Body of pancreas (tissue), 4 donors: ENCODE measurements at regions of chr11 and their contacts with region 1.

Region 1: DNA sequence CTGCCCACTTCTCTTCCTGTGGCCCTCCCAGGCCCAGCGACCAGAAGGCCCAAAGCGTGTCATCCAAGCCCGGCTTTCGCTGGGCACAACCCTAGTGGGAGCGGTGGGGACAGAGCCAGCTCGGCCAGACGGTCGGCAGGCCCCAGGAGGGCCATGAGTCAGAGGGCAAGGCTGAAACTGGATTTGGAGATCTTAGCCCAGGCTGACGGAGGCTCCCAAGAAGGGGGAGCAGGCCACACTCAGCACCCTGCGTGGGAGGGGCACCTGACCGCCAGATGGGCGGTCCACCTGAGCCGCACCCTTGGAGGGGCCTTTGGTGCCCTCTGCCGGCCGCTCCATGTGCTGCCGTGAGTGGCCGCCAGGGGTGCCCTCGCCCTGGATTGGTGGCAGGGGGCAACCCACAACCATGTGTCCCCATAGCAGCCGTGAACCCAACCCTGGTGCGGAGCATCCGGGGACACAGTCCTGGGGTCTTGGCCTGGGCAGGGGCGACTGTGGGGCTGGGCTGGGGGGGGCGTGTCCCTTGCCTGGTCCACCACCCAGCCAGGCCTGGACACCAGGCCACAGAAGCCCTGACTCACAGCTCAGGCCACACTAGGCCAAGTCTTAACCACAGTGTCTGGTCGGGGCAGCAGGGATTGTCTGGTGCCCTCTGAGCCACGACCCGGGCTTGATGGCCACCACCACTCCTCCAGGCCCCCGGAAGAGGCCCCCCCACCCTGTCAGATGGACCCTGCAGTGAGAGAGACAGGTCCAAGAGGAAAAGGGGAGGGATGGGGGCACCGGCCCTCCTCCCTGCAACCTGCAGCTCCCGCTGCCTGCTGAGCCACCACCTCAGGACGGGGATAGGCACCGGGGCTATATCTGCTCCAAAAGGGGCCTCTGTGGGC is 19.2 kb upstream of the TALDO1 start:
- DNase-seq: peak; percentile 86 to 92 (median 90)
- ATAC-seq: peak; percentile 83
- H3K4me3 ChIP-seq: no peak overlapping the region
- H3K27ac ChIP-seq: peak overlapping the region in 3 of 4 donors; percentile 22 to 86 (median 74)
- H3K4me1 ChIP-seq: peaks cover 34% of the 10 kb centered on the region
- H3K27me3 ChIP-seq: peaks cover 0 to 4% of the 10 kb centered on the region in 2 donors
- CTCF ChIP-seq: peak; percentile 95 to 100 (median 99)
- POLR2A ChIP-seq: no peak

Region 2: DNA sequence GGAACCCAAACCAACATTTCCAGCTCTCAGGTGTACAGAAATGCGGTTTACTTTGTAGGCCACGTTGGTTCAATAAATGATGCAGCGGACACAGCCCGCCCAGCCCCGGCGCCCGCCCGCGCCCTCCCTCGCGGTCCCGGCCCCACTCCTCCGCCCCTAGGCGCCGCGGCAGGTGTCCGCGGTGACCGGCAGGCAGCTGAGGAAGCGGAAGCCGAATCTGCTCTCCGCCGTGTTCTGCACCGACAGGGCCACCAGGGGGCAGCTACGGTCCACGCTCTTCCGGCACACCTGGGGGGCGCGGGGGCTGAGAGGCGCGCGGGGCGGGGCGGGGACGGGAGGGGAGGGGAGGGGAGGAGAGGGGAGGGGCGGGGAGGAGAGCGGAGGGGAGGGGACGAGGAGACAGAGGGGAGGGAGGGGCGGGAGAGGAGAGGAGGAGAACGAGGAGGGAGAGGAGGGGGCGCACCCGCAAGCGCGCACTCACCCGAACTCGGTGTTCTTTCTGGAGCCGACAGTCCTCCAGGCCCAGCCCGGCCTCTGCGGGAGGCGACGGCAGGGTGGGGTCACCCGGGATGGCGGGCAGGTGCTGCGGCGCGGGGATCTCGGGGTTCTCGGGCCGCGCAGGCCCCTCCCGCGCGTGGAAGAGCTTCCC is 173.2 kb before region 1 on chr11:
- intact Hi-C with region 1: loop called (anchors 10 kb)
- DNase-seq: peak; percentile 80 to 85 (median 83)
- ATAC-seq: peak; percentile 81
- H3K4me3 ChIP-seq: peak overlapping the region in 1 of 2 donors; percentile 10
- H3K27ac ChIP-seq: peak overlapping the region; percentile 42 to 77 (median 64)
- H3K4me1 ChIP-seq: peaks cover 36% of the 10 kb centered on the region
- H3K27me3 ChIP-seq: no peaks in the 10 kb centered on the region
- CTCF ChIP-seq: peak; percentile 45 to 84 (median 60)
- POLR2A ChIP-seq: peak in 2 of 3 donors; percentile 40 to 46

Region 3: DNA sequence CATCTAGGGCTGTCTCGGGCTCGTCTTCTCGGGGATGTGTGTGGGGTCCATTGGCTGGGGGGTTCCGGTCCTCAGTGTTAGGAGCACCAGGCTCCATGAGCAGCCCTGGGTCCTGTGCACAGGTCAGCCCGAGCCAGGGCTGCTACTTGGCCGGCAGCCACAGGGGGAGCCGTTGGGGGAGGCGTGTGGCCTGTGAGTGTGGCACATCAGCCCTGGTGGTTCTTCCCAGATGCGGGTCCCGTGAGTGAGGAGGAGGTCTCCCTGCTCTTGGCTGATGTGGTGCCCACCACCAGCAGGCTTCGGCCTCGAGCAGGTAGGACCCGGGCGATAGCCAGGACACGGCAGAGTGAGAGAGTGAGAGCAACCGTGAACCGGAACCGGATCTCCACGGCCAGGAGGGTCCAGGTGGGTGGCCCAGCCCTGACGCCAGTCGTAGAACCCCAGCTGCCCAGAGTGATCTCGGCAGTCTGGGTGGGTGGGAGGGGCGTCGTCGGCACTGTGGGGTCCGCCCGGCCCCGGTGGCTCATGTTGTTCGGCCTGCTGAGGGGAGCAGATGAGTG is 130.9 kb before region 1 on chr11:
- intact Hi-C with region 1: no loop called
- DNase-seq: no peak
- ATAC-seq: no peak
- H3K4me3 ChIP-seq: no peak overlapping the region
- H3K27ac ChIP-seq: no peak overlapping the region
- H3K4me1 ChIP-seq: no peaks in the 10 kb centered on the region
- H3K27me3 ChIP-seq: no peaks in the 10 kb centered on the region
- CTCF ChIP-seq: no peak
- POLR2A ChIP-seq: no peak

Region 4: GRCh38 chr11:655036-655726 is 72.9 kb before region 1 on chr11:
- intact Hi-C with region 1: loop called (anchors 5 kb)
- DNase-seq: peak in 3 of 4 donors; percentile 44 to 53 (median 48)
- ATAC-seq: peak; percentile 81
- H3K4me3 ChIP-seq: no peak overlapping the region
- H3K27ac ChIP-seq: peak overlapping the region in 1 of 4 donors; percentile 28
- H3K4me1 ChIP-seq: peaks cover 10% of the 10 kb centered on the region
- H3K27me3 ChIP-seq: no peaks in the 10 kb centered on the region
- CTCF ChIP-seq: no peak
- POLR2A ChIP-seq: no peak